Astrocyte of the spinal cord (primary cell): ENCODE measurements at regions of chr15 and their contacts with region 1.

Region 1: GRCh38 chr15:92949604-92950249 is 49.6 kb downstream of the CHD2 start:
- DNase-seq: no peak
- H3K4me3 ChIP-seq: no peak overlapping the region
- CTCF ChIP-seq: no peak

Region 2: DNA sequence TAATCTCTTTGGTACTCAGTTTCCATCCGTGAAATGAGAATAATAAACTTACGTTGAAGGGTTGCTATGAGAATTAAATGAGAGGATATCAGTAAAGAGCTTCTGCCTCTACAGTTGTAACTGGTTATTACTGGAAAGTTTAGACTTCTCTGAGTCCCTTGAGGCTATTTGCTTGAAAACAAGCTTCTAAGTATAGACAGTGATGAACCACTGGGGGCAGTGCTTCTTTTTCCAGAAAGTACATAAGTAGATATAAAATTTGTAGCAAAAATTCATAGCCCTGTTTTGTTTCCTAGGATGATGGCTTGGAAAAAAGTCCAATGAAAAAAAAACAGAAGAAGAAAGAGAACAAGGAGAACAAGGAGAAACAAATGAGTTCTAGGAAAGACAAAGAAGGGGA is 52.2 kb after region 1 on chr15:
- in situ Hi-C with region 1: loop called (anchors 10 kb)
- DNase-seq: no peak
- H3K4me3 ChIP-seq: no peak overlapping the region
- CTCF ChIP-seq: peak; percentile 1